ENCODE measurements at regions of chr10 and their contacts with region 1.

Region 1: DNA sequence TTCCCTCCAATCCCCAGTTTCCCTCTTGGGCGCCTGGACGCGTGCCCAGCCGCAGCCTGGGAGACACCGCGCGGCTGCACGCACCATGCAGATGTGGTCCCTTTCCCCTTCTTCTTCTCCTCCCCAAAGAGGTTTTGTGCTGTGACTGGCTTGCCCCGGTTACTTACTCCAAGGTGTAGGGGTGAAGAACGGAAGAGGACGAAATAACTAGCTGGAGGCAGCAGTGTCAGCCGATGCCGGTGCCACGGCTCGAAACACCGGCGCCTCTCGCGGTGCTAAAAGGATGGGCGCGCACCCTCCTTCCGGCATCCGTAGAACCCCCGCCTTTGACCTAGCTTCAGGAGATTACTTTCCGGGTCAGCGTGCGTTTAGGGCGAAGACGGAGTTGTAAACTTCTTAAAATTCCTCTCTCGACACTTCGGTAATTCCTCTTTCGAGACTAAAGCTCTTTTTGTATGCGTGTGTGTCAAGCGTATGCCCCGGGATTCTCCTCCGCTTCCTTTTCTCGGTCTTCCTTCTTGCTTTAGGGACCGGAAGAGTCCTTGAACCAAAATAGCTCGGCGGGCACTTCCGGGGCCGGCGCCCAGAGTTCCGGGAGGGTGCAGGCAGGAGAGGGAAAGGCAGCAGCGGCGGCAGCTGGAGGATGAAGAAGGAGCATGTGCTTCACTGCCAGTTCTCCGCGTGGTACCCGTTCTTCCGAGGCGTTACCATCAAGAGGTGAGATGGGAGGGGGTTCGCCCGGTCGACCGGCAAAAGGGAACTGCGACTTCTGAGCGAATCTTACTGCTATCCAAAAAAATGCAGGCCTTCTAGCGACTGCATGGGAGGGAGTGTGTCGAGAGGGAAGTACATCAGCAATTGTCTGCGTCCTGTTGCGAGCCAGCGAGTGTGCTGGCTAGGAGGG is at the starts of genes CDC123 and NUDT5:
- DNase-seq: peak; percentile 81
- ATAC-seq: peak; percentile 92
- H3K4me3 Mint-ChIP-seq: peak within 1 kb of the TSS; percentile 93
- H3K27ac Mint-ChIP-seq: peak within 1 kb of the TSS; percentile 99
- H3K4me1 Mint-ChIP-seq: peaks cover 49% of the 10 kb centered on the region
- H3K27me3 Mint-ChIP-seq: no peaks in the 10 kb centered on the region
- CTCF ChIP-seq: no peak
- total RNA-seq, gene CDC123: 81.1 and 84.6 TPM in 2 replicates
- total RNA-seq, gene NUDT5: 53.2 and 57.3 TPM in 2 replicates

Region 2: DNA sequence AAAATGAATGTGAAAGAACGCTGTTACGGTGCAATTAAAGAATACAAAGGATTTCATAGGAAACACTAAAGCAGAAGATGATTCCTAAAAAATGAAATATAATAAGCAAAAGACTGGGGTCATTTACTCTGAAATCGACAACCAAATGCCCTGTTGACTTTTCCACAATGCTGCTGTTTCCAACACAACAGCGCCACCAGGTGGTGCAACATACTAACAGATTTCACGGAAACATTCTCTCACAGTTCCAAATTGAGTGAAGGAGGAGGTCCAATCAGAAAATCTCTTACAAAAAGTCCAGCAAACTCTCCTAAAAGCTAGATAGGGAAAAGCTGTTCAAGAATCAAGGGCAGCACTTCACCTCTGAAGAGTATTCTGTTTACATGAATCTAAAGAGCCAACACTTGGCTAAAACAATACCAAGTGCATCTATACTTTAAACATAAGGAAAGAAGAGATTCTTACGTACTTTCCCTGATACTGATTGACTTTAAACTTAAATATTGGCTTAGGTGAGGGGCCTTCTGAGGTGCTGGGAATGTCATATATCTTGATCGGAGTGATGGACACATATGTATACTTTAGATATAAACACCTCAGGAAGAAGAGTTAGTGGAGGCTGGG is 209.2 kb before region 1 on chr10:
- CTCF ChIA-PET with region 1: no interaction called
- POLR2A ChIA-PET with region 1: interaction called, 5 read pairs
- intact Hi-C with region 1: loop called (anchors 1 kb)
- DNase-seq: peak; percentile 48
- ATAC-seq: peak; percentile 71
- H3K4me3 Mint-ChIP-seq: no peak overlapping the region
- H3K27ac Mint-ChIP-seq: no peak overlapping the region
- H3K4me1 Mint-ChIP-seq: peaks cover 19% of the 10 kb centered on the region
- H3K27me3 Mint-ChIP-seq: no peaks in the 10 kb centered on the region
- CTCF ChIP-seq: no peak

Region 3: GRCh38 chr10:12129222-12130111 is 66.4 kb before region 1 on chr10 and contains the start of gene SEC61A2:
- CTCF ChIA-PET with region 1: no interaction called
- POLR2A ChIA-PET with region 1: interaction called, 8 read pairs
- intact Hi-C with region 1: loop called (anchors 1 kb)
- DNase-seq: peak; percentile 100
- ATAC-seq: peak; percentile 89
- H3K4me3 Mint-ChIP-seq: peak within 1 kb of the TSS; percentile 90
- H3K27ac Mint-ChIP-seq: peak within 1 kb of the TSS; percentile 88
- H3K4me1 Mint-ChIP-seq: peaks cover 15% of the 10 kb centered on the region
- H3K27me3 Mint-ChIP-seq: no peaks in the 10 kb centered on the region
- CTCF ChIP-seq: no peak
- total RNA-seq, gene SEC61A2: 13.3 and 20.8 TPM in 2 replicates

Region 4: GRCh38 chr10:12214763-12215218 is 18.9 kb after region 1 on chr10:
- CTCF ChIA-PET with region 1: interaction called, 18 read pairs
- POLR2A ChIA-PET with region 1: interaction called, 14 read pairs
- intact Hi-C with region 1: loop called (anchors 1 kb)
- DNase-seq: no peak
- ATAC-seq: peak; percentile 42
- H3K4me3 Mint-ChIP-seq: peak overlapping the region; percentile 78
- H3K27ac Mint-ChIP-seq: peak overlapping the region; percentile 88
- H3K4me1 Mint-ChIP-seq: peaks cover 19% of the 10 kb centered on the region
- H3K27me3 Mint-ChIP-seq: no peaks in the 10 kb centered on the region
- CTCF ChIP-seq: peak; percentile 66

Region 5: DNA sequence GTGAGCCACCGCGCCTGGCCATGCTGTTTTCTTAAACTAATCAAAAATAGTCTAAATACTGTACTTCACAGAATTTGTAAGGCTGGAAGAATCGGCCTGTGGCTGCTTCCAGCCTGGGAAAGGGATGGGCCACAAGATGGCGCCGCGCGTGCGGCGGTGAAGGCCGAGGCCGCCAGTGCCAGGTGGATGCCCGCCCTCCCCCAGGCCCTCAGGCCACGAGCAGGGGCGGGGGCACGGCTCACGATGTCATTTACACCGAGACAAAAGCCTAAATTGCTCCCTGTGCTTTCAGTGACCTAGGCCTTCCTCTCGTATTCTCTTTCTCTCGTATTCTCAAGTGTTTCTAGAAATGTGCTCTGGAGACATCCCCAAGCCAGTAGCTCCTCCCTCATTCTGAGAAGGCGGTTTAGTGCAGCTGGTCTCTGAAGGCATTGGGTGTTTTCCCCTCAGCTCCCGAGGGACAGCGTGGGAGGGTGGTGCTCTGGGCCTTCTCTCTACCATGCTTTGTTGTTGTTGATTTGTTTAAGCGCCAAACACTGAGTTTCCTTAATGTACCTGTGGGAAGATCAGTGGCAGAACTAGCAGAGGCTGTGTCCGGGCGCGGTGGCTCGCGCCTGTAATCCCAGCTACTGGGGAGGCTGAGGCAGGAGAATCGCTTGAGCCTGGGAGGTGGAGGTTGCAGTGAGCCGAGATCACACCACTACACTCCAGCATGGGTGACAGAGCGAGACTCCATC is 68.5 kb after region 1 on chr10:
- CTCF ChIA-PET with region 1: interaction called, 3 read pairs
- POLR2A ChIA-PET with region 1: interaction called, 7 read pairs
- intact Hi-C with region 1: loop called (anchors 2 kb)
- DNase-seq: peak; percentile 86
- ATAC-seq: peak; percentile 87
- H3K4me3 Mint-ChIP-seq: peak overlapping the region; percentile 83
- H3K27ac Mint-ChIP-seq: peak overlapping the region; percentile 100
- H3K4me1 Mint-ChIP-seq: peaks cover 58% of the 10 kb centered on the region
- H3K27me3 Mint-ChIP-seq: no peaks in the 10 kb centered on the region
- CTCF ChIP-seq: no peak

Region 6: GRCh38 chr10:12710594-12711349 is 514.9 kb after region 1 on chr10:
- CTCF ChIA-PET with region 1: interaction called, 3 read pairs
- POLR2A ChIA-PET with region 1: no interaction called
- intact Hi-C with region 1: loop called (anchors 1 kb)
- DNase-seq: peak; percentile 68
- ATAC-seq: peak; percentile 93
- H3K4me3 Mint-ChIP-seq: no peak overlapping the region
- H3K27ac Mint-ChIP-seq: peak overlapping the region; percentile 54
- H3K4me1 Mint-ChIP-seq: peaks cover 23% of the 10 kb centered on the region
- H3K27me3 Mint-ChIP-seq: no peaks in the 10 kb centered on the region
- CTCF ChIP-seq: no peak

Measured in activated B cell treated with CpG ODN at 0.5 μM for 24 hours (primary cell).